ENCODE measurements at regions of chr17 and their contacts with region 1.

Region 1: DNA sequence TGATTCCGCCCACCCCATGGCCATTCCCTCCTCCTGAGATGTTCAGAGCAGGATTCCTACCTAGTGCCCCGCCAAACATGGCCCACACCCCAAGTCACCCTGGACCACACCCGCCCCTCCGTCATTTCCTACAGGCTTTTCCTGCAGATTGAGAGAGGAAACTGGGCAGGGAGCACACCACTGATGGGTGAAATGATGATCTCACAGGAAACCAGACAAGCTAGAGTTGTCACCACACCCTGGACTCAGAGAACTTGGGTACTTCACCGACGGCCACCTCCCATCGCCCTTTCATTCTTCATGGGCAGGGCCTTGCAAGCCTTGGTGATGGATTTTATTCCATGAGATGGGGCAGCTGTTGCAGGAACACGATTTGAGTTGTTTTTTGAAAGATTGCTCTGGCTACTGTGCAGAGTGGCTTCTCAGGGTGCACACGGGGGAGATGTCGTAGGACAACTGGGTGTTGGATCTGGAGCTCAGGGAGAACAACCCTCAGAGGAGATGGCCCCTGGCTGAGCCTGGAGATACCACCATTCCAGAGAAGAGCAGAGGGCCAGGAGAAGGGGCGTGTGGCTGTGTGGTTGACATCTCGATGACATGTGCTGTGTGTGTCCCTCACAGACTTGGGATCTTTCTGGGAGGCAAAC is 7.4 kb upstream of the B9D1 start:
- DNase-seq: no peak
- H3K4me3 ChIP-seq: no peak overlapping the region
- H3K27ac ChIP-seq: no peak overlapping the region
- H3K4me1 ChIP-seq: peaks cover 2% of the 10 kb centered on the region
- H3K27me3 ChIP-seq: no peaks in the 10 kb centered on the region
- CTCF ChIP-seq: no peak

Region 2: GRCh38 chr17:18946531-18946930 is 423.4 kb before region 1 on chr17:
- CTCF ChIA-PET with region 1: no interaction called
- dilution Hi-C with region 1: no loop called
- in situ Hi-C with region 1: no loop called
- intact Hi-C with region 1: no loop called
- DNase-seq: peak; percentile 27
- H3K4me3 ChIP-seq: no peak overlapping the region
- H3K27ac ChIP-seq: no peak overlapping the region
- H3K4me1 ChIP-seq: no peaks in the 10 kb centered on the region
- H3K27me3 ChIP-seq: no peaks in the 10 kb centered on the region
- CTCF ChIP-seq: no peak

Region 3: DNA sequence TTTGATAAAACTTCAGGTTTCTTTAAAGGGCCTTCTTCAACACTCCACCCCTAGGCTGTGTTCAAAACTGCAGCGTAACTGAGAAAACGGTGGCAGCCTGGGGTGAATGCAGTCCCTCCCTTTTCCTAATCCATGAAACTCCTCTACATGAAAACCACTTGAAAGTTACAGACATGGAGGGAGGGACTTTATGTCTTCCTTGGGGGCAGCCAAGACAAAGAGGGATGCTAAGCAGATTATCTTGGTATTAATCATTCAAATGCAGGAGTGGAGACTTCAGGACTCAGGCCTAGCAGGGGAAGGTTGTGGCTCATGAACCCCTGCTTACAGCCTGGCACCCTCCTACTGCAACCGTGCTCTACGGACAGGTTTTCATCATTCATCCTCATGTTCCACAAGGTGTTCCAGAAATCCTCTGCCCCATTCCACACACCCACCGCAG is 87.9 kb after region 1 on chr17:
- CTCF ChIA-PET with region 1: no interaction called
- dilution Hi-C with region 1: no loop called
- in situ Hi-C with region 1: loop called in 1 of 2 experiments (anchors 5 kb)
- intact Hi-C with region 1: no loop called
- DNase-seq: no peak
- H3K4me3 ChIP-seq: no peak overlapping the region
- H3K27ac ChIP-seq: no peak overlapping the region
- H3K4me1 ChIP-seq: no peaks in the 10 kb centered on the region
- H3K27me3 ChIP-seq: peaks cover 2% of the 10 kb centered on the region
- CTCF ChIP-seq: no peak

Measured in mammary epithelial cell (primary cell).